CD4-positive, alpha-beta T cell (primary cell): ENCODE measurements at regions of chr1 and their contacts with region 1.

Region 1: DNA sequence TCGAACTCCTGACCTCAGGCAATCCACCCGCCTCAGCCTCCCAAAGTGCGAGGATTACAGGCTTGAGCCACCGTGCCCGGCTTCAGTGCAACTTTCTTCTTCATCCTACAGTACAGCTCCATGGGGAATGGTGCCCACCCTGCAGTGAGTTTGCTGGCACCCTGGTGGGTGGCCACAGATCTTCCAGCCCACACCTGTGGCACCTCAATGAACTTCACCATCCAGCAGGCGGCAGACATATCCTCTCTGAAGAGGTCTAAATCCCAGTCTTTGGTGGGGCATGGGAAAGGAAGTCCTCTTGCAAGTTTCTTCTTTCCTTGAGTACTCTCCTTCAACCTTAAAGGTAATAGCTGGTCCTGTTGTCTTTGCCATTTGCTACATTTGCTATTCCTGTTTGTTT is 18.1 kb upstream of the ZBTB8A start:
- DNase-seq: no peak
- ATAC-seq: no peak
- H3K4me3 ChIP-seq: no peak overlapping the region
- H3K4me3 Mint-ChIP-seq: peak overlapping the region; percentile 71
- H3K27ac ChIP-seq: no peak overlapping the region
- H3K27ac Mint-ChIP-seq: no peak overlapping the region
- H3K4me1 ChIP-seq: peaks cover 7% of the 10 kb centered on the region
- H3K4me1 Mint-ChIP-seq: no peaks in the 10 kb centered on the region
- H3K27me3 ChIP-seq: peaks cover 0 to 2% of the 10 kb centered on the region in 2 experiments
- H3K27me3 Mint-ChIP-seq: peaks cover 5% of the 10 kb centered on the region
- CTCF ChIP-seq: no peak

Region 2: GRCh38 chr1:32307323-32307722 is 213.8 kb before region 1 on chr1:
- CTCF ChIA-PET with region 1: no interaction called
- POLR2A ChIA-PET with region 1: no interaction called
- intact Hi-C with region 1: no loop called
- DNase-seq: no peak
- ATAC-seq: no peak
- H3K4me3 ChIP-seq: no peak overlapping the region
- H3K4me3 Mint-ChIP-seq: no peak overlapping the region
- H3K27ac ChIP-seq: no peak overlapping the region
- H3K27ac Mint-ChIP-seq: peak overlapping the region; percentile 68
- H3K4me1 ChIP-seq: peaks cover 40% of the 10 kb centered on the region
- H3K4me1 Mint-ChIP-seq: peaks cover 74% of the 10 kb centered on the region
- H3K27me3 ChIP-seq: no peaks in the 10 kb centered on the region
- H3K27me3 Mint-ChIP-seq: no peaks in the 10 kb centered on the region
- CTCF ChIP-seq: no peak

Region 3: DNA sequence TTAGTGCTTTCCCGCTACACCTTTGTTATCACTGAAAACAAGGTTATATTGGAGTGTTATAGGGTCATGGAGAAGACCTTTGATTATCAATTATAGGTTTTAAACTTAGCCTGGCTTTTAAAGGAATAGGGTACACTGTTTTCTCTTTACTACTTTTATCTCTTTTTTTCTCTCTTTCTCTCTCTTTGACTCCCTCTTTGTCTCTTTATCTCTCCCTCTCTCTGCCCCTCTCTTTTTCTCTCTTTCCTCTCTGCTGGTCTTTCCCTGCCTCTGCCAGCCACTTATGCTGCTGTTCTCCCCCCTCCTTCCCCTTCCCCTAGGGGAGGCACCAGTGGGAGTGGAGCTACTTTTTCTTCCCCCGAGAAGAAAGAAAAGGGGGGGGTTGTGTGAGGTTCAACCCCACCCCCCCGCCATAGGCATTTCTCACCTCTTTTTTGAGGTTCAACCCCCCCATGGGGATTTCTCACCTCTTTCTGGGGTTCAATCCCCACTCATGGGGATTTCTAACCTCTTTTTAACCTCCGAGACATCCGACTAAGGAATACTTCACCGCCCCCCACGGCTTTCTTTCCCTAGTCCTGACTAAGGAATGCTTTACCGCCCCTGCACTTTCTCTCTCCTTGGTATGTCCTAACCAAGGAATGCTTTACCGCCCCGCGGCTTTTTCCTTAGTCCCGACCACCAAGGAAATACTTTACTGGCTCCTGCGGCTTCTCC is 73.5 kb before region 1 on chr1:
- CTCF ChIA-PET with region 1: interaction called, 3 read pairs
- POLR2A ChIA-PET with region 1: no interaction called
- intact Hi-C with region 1: loop called in 1 of 2 experiments (anchors 2 kb)
- DNase-seq: no peak
- ATAC-seq: no peak
- H3K4me3 ChIP-seq: no peak overlapping the region
- H3K4me3 Mint-ChIP-seq: no peak overlapping the region
- H3K27ac ChIP-seq: no peak overlapping the region
- H3K27ac Mint-ChIP-seq: no peak overlapping the region
- H3K4me1 ChIP-seq: no peaks in the 10 kb centered on the region
- H3K4me1 Mint-ChIP-seq: no peaks in the 10 kb centered on the region
- H3K27me3 ChIP-seq: peaks cover 3 to 9% of the 10 kb centered on the region in 2 experiments
- H3K27me3 Mint-ChIP-seq: peaks cover 47% of the 10 kb centered on the region
- CTCF ChIP-seq: no peak

Region 4: GRCh38 chr1:32773018-32773763 is 252.0 kb after region 1 on chr1:
- CTCF ChIA-PET with region 1: interaction called, 24 read pairs
- POLR2A ChIA-PET with region 1: no interaction called
- intact Hi-C with region 1: loop called (anchors 1 kb)
- DNase-seq: peak; percentile 59 to 85 (median 71)
- ATAC-seq: peak; percentile 89
- H3K4me3 ChIP-seq: no peak overlapping the region
- H3K4me3 Mint-ChIP-seq: no peak overlapping the region
- H3K27ac ChIP-seq: no peak overlapping the region
- H3K27ac Mint-ChIP-seq: no peak overlapping the region
- H3K4me1 ChIP-seq: peaks cover 8% of the 10 kb centered on the region
- H3K4me1 Mint-ChIP-seq: peaks cover 5% of the 10 kb centered on the region
- H3K27me3 ChIP-seq: no peaks in the 10 kb centered on the region
- H3K27me3 Mint-ChIP-seq: no peaks in the 10 kb centered on the region
- CTCF ChIP-seq: peak; percentile 87

Region 5: DNA sequence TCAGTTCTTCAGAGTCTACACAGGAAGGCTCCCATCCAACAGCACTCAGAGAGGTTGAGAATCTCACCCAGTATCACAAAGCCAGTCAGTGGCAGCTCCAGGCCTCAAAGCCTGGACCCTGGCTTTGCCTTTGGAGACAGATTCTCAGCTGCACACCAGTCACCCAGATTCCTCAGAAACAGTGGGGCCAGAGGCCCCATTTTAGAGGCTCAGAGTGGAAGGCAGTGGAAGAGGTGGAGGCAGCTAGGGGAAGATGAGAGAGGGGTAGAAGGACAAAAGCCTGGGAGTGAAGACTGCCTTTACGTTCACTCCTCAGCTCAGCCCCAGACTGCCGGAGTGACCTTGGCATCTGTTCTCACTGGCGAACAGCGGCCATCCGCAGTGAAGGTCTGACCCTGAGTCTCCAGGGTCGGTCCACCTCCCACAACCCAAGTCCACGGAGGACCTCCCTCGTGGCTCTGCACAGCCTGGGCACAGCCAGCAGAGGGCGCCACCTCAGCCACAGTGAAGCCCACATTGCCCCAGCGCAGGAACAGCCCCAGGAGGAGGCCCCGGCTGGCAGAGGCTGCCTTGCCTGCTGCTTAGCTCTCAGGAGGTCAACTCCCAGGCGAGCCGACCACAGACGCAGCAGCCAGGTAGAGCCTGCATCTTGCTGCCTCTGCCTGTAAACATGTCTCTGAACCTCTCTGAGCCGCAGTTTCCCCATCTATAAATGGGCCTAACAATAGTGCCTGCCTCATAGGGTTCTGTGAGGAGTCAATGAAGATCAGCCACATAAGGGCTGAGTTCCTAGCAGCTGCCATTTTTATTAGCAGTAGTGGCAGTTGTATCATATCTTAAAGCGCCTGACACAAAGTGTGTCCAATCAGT is 355.4 kb after region 1 on chr1:
- CTCF ChIA-PET with region 1: no interaction called
- POLR2A ChIA-PET with region 1: no interaction called
- intact Hi-C with region 1: loop called (anchors 2 kb)
- DNase-seq: peak in 13 of 14 experiments; percentile 30 to 77 (median 46)
- ATAC-seq: peak; percentile 85
- H3K4me3 ChIP-seq: no peak overlapping the region
- H3K4me3 Mint-ChIP-seq: no peak overlapping the region
- H3K27ac ChIP-seq: no peak overlapping the region
- H3K27ac Mint-ChIP-seq: no peak overlapping the region
- H3K4me1 ChIP-seq: peaks cover 15% of the 10 kb centered on the region
- H3K4me1 Mint-ChIP-seq: peaks cover 1% of the 10 kb centered on the region
- H3K27me3 ChIP-seq: peaks cover 17 to 25% of the 10 kb centered on the region in 2 experiments
- H3K27me3 Mint-ChIP-seq: peaks cover 66% of the 10 kb centered on the region
- CTCF ChIP-seq: peak; percentile 76